Brain microvascular endothelial cell (primary cell): ENCODE measurements at regions of chr7 and their contacts with region 1.

Region 1: DNA sequence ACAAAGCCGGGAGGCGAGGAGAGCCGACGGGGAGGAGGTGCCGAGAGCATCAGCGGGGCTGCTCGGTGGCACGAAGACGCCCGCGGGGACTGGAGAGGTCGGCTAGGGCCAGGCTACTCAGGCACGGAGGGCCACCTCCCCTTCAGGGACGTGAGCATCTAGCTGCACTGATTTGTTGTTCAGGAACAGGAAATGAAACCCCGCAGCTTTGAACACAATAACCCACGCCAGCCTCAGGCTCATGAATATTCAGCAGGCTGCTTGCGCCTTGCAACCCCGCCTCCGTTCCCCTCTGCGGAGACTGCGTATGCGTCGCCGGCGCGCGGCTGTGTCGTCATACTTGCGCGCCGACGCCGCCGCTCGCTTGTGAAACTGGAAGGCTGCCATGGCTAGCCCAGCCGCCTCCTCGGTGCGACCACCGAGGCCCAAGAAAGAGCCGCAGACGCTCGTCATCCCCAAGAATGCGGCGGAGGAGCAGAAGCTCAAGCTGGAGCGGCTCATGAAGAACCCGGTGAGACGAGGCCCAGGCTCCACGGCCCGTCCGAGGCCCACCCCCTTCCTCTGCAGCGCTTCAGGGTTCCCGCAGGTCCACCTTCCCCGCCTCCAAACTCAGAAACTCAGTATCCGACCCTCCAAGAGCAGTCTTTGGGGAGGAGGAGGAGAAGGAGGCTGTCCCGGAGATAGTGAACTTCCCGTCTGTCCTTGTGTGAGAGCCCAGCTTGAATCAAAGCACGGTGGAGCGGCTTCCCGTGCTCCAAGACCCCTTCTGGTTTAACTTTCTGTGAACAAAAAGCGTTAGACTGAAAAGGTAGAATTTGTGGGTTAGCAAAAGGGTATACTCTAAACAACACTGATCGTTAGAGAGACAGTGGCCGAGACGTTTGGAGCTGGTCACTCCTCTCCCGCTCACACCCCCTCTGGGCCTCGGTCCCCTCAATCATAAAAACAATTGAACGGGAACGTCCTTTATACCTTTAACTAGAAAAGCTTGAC is at the start of gene PRKRIP1:
- DNase-seq: peak; percentile 90
- H3K4me3 ChIP-seq: peak within 1 kb of the TSS; percentile 68
- H3K27ac ChIP-seq: peak within 1 kb of the TSS; percentile 64
- H3K27me3 ChIP-seq: no peaks in the 10 kb centered on the region
- CTCF ChIP-seq: no peak

Region 2: DNA sequence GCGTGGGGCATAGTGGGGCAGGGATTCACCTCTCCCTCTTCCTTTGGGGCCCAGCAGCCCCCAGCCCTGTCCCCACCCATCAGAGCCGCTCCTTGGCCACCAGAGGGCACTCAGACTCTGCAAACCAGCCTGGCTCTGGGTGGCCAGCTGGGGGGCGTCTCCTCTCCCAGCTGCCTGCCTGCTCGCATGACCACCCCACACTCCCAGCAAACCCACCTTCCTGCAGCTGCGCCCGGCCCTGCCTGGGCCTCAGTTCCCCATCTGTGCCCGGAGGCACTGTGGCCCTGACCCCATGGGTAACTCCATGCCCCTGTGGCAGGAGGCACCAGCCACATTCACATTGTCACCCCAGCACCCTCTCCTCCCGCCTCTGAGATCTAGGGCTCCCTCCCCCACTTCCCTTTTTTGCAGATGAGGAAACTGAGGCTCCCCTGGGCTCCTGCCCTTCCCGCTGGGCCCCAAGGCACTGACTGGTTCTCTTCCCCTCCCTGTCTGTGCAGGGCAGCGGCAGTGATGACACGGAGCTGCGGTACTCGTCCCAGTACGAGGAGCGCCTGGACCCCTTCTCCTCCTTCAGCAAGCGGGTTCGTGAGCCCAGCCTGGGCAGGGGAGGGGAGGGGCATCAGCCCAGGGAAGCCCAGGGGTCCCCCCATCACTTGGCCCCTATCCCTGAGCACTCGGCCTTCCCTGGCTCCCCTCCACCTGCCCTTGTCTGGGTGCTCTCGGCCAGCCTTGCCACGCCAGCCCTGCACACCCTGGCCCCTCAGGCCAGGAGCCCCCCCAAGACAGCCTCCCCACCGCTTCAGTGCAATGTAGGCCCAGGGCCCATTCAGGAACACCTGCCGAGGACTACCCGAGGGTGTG is 116.6 kb before region 1 on chr7:
- in situ Hi-C with region 1: loop called (anchors 10 kb)
- DNase-seq: no peak
- H3K4me3 ChIP-seq: no peak overlapping the region
- H3K27ac ChIP-seq: no peak overlapping the region
- H3K27me3 ChIP-seq: no peaks in the 10 kb centered on the region
- CTCF ChIP-seq: peak; percentile 92

Region 3: GRCh38 chr7:102473261-102473991 is 77.1 kb after region 1 on chr7:
- in situ Hi-C with region 1: no loop called
- DNase-seq: no peak
- H3K4me3 ChIP-seq: no peak overlapping the region
- H3K27ac ChIP-seq: no peak overlapping the region
- H3K27me3 ChIP-seq: no peaks in the 10 kb centered on the region
- CTCF ChIP-seq: no peak